ENCODE measurements at regions of chr17 and their contacts with region 1.

Region 1: DNA sequence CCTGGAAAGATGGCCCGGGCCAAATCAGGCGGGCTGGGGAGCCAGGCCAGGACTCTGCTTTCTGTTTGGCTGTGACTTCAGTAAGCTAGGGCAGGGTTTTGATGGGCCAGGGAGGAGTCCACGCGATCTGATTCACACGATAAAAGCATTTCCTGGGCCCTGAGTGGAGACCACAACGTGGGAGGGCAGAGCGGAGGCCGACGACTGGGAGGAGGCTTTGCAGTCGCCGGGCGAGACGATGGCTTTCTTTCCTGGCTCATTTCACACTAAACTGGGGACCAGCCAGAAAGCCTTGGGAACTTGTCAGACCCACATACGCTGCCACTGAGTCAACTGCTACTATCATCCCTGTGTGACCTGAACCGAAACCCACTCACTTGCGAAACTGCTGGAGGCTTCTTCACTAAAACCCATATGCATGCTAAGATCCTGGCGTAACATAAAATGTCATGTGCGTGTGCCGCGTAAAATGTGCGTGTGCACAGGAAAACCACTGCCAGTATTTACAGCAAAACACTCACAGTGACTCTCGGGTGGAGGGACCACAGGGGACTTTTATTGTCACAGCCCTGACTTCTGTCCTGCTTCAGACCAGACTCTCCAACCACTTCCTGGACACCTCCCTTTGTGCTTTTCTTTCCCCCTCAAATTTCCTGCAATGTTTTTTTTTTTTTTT is 14.2 kb upstream of the RHBDF2 start:
- DNase-seq: peak; percentile 62 to 94 (median 90)
- ATAC-seq: peak; percentile 90
- H3K4me3 ChIP-seq: peak overlapping the region; percentile 12
- H3K4me3 Mint-ChIP-seq: peak overlapping the region; percentile 75 to 89 (median 82)
- H3K27ac ChIP-seq: peak overlapping the region; percentile 96
- H3K27ac Mint-ChIP-seq: peak overlapping the region; percentile 95 to 100 (median 99)
- H3K4me1 ChIP-seq: peaks cover 36 to 58% of the 10 kb centered on the region in 2 donors
- H3K4me1 Mint-ChIP-seq: peaks cover 25 to 67% (median 37%) of the 10 kb centered on the region in 7 donors
- H3K27me3 ChIP-seq: no peaks in the 10 kb centered on the region
- H3K27me3 Mint-ChIP-seq: peaks cover 0 to 5% (median 0%) of the 10 kb centered on the region in 5 donors

Region 2: GRCh38 chr17:76492989-76493501 is 22.4 kb before region 1 on chr17:
- CTCF ChIA-PET with region 1: no interaction called
- POLR2A ChIA-PET with region 1: interaction called, 7 read pairs
- intact Hi-C with region 1: loop called in 1 of 2 experiments (anchors 1 kb)
- DNase-seq: peak in 2 of 9 donors; percentile 22 to 70
- ATAC-seq: peak; percentile 84
- H3K4me3 ChIP-seq: peak overlapping the region; percentile 65
- H3K4me3 Mint-ChIP-seq: peak overlapping the region; percentile 72 to 92 (median 82)
- H3K27ac ChIP-seq: peak overlapping the region; percentile 0
- H3K27ac Mint-ChIP-seq: peak overlapping the region; percentile 44 to 99 (median 76)
- H3K4me1 ChIP-seq: peaks cover 32 to 47% of the 10 kb centered on the region in 2 donors
- H3K4me1 Mint-ChIP-seq: peaks cover 12 to 76% (median 32%) of the 10 kb centered on the region in 7 donors
- H3K27me3 ChIP-seq: no peaks in the 10 kb centered on the region
- H3K27me3 Mint-ChIP-seq: no peaks in the 10 kb centered on the region

Region 3: GRCh38 chr17:76501018-76501826 is 14.2 kb before region 1 on chr17 and contains the start of gene RHBDF2:
- CTCF ChIA-PET with region 1: interaction called, 9 read pairs
- POLR2A ChIA-PET with region 1: interaction called, 21 read pairs
- intact Hi-C with region 1: loop called (anchors 1 kb)
- DNase-seq: peak; percentile 90 to 100 (median 95)
- ATAC-seq: peak; percentile 99
- H3K4me3 ChIP-seq: peak within 1 kb of the TSS; percentile 62
- H3K4me3 Mint-ChIP-seq: peak within 1 kb of the TSS; percentile 82 to 91 (median 86)
- H3K27ac ChIP-seq: peak within 1 kb of the TSS; percentile 73
- H3K27ac Mint-ChIP-seq: peak within 1 kb of the TSS; percentile 95 to 99 (median 97)
- H3K4me1 ChIP-seq: peaks cover 22 to 44% of the 10 kb centered on the region in 2 donors
- H3K4me1 Mint-ChIP-seq: peaks cover 17 to 61% (median 35%) of the 10 kb centered on the region in 7 donors
- H3K27me3 ChIP-seq: no peaks in the 10 kb centered on the region
- H3K27me3 Mint-ChIP-seq: no peaks in the 10 kb centered on the region
- total RNA-seq, gene RHBDF2: 31.1 to 119 (median 35.4) TPM

Measured in naive thymus-derived CD4-positive, alpha-beta T cell (primary cell).